ENCODE measurements at regions of chr6 and their contacts with region 1.

Region 1: DNA sequence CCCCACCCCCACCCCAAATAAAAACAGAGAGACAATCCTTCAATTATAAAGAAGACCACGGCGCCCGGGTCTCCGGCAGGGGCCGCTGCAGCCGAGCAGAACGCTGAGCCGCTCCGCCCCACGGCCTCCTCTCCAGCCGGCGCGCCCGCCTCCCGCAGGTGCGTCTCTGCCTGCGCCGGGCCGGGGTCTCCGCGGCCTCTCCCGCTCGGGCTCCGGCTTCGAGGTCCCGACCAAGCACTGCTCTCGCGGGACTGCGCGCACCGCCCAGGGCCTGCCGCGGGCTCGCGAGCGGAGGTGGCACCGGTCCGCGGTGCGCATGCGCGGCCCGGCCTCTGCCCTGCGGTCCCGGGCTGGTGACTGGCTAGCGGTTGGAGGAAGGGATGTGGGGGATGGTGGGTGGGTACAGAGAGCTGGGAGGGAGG is 241 bp upstream of the SIRT5 start:
- DNase-seq: peak; percentile 99
- H3K4me3 ChIP-seq: peak overlapping the region; percentile 75 to 83
- H3K27ac ChIP-seq: peak overlapping the region; percentile 90 to 92
- H3K4me1 ChIP-seq: peaks cover 0 to 7% of the 10 kb centered on the region in 2 experiments; a peak in 2 of 4 replicates
- H3K27me3 ChIP-seq: no peaks in the 10 kb centered on the region
- CTCF ChIP-seq: peak; percentile 49
- EP300 ChIP-seq: no peak
- RAD21 ChIP-seq: peak; percentile 40

Region 2: DNA sequence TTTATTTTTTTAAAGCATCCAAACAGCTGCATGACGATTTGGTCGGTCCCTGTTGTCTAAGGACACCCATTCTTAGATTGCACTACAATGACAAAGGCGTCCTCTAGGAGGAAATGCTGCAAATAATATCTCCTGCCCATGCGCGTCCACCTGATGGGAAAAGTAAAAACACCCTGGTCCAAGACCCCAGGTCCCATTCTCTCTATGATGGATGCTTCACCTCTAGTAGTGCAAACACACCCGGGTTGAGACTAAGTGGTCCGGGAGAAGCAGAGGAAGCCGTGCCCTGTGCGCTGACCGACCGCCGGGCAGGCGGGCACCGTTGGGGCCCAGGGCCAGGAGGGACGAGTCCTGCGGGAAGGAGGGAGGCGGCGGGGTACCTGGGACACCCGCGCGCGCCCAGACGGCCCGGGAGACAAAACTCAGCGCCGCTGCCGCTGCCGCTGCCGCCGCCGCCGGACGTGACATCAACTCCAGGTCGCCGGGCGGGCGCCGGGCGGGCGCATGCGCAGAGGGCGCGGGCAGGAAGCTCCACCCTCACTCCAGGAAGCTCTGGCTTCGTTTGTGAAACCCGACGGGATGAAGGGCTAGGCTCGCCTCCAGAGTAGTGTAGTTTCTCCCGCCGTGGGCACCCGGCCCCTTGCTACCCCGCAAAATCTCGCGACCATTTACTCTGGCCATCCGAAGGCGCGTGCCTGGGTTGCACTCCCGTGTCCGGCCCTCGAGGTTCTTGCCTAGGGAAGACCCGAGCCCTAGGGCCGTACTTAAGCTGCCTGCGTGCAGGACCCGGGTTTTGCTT is 245.9 kb before region 1 on chr6 and contains the start of gene TBC1D7:
- CTCF ChIA-PET with region 1: interaction called, 30 read pairs
- POLR2A ChIA-PET with region 1: interaction called, 3 read pairs
- DNase-seq: peak; percentile 94
- H3K4me3 ChIP-seq: peak within 1 kb of the TSS; percentile 88 to 96
- H3K27ac ChIP-seq: peak within 1 kb of the TSS; percentile 86 to 97
- H3K4me1 ChIP-seq: peaks cover 4 to 12% of the 10 kb centered on the region in 2 experiments; a peak in 3 of 4 replicates
- H3K27me3 ChIP-seq: no peaks in the 10 kb centered on the region
- CTCF ChIP-seq: peak; percentile 24; the same call in 1 of the 2 replicates
- EP300 ChIP-seq: no peak
- RAD21 ChIP-seq: 0 out of 2 replicates have a peak, but pooled peaks have one; percentile 10
- polyA plus RNA-seq, gene TBC1D7: 25.2 and 27.5 TPM in 2 replicates

Region 3: DNA sequence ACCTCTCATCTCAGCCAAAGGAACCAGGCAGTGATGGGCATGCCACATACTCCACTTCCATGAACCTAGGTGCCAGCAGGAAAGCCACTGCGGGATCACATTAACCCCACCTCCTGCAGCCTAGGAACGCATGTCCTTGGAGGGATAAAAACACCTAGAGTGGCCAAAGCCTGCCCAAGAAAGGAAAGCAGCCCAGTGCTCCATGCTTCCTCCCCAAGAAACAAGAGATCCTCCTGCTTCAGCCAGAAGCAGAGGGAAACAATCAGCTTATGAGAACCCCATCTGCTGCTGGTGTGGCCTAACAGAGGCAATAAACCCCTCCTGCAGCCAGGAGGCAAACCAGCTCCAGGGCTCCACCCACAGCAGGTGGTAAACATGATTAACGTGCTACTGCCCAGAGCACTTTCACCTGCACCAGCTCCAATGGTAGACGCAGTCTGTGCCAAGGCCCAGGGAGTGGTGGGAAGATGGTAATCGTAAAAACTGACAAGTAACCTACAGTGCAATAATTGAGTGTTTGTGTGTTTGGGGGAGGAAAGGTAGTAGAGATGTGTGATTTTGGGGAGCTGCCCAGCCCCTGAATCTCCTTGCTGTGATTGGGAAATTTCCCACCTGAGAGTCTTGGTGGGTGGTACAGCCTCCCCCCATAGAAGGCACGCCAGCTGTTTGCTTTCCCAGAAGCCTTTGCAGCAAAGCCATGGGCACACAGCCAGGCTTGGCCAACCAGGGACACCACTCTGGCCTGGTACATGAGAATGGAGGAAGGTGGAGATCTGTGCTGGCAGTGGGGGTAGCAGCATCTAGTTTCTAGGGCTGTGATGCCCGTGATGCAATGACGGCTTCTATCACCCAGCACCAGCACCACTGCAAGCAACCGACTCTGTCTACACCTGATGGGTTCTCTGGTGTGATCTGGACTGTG is 195.2 kb before region 1 on chr6:
- CTCF ChIA-PET with region 1: interaction called, 10 read pairs
- POLR2A ChIA-PET with region 1: no interaction called
- DNase-seq: no peak
- H3K4me3 ChIP-seq: no peak overlapping the region
- H3K27ac ChIP-seq: no peak overlapping the region
- H3K4me1 ChIP-seq: peaks cover 0 to 11% of the 10 kb centered on the region in 2 experiments; a peak in 1 of 4 replicates
- H3K27me3 ChIP-seq: no peaks in the 10 kb centered on the region
- CTCF ChIP-seq: no peak
- EP300 ChIP-seq: no peak
- RAD21 ChIP-seq: no peak

Region 4: GRCh38 chr6:13561624-13562267 is 12.4 kb before region 1 on chr6:
- CTCF ChIA-PET with region 1: interaction called, 48 read pairs
- POLR2A ChIA-PET with region 1: interaction called, 3 read pairs
- DNase-seq: no peak
- H3K4me3 ChIP-seq: no peak overlapping the region
- H3K27ac ChIP-seq: no peak overlapping the region
- H3K4me1 ChIP-seq: peaks cover 0 to 16% of the 10 kb centered on the region in 2 experiments; a peak in 2 of 4 replicates
- H3K27me3 ChIP-seq: peaks cover 4% of the 10 kb centered on the region; the same call in 1 of the 2 replicates
- CTCF ChIP-seq: no peak
- EP300 ChIP-seq: no peak
- RAD21 ChIP-seq: no peak

Region 5: DNA sequence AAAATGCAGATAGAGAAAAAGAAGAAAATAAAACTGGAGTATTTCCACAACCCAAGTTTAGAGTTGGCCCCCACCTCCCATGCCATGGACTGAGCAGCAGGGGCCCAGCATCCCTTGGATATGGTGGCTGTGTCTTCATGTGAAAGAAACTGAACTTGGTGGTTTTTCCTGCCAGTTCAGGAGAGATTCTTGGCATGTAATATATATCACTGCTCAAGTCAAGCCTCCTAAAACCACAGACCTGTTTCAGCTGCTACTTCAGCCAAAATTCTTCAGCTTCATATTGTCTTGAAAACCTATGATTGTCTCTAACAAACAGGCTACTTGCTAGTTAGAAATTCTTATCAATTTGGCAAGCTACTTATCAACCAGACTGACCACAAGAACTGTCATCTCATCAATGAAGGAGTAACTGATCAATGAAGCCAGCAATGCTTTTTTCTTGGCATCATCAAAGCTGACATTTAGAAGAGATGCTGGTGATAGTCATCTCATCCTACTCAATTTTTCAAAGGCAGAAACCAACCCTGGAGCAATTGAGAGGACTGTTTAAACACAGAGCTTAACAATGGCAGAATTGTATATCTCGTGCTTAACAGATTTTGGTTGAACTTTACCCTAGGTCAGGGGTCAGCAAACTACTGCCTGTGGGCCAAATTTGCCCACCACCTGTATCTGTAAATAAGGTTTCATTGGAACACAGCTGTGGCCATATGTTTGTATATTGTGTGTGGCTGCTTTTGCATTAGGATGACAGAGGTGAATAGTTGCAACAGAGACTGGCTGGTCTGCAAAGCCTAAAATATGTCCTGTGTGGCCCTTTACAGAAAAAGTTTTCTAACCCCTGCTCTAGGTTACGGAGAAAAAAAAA is 30.6 kb after region 1 on chr6:
- CTCF ChIA-PET with region 1: interaction called, 16 read pairs
- POLR2A ChIA-PET with region 1: no interaction called
- DNase-seq: no peak
- H3K4me3 ChIP-seq: no peak overlapping the region
- H3K27ac ChIP-seq: 0 out of 4 replicates have a peak overlapping the region, but pooled peaks of 1 of the 2 experiments have one; percentile 14
- H3K4me1 ChIP-seq: peaks cover 0 to 3% of the 10 kb centered on the region in 2 experiments; a peak in 1 of 4 replicates
- H3K27me3 ChIP-seq: no peaks in the 10 kb centered on the region
- CTCF ChIP-seq: no peak
- EP300 ChIP-seq: no peak
- RAD21 ChIP-seq: no peak

Region 6: GRCh38 chr6:13702809-13703302 is 128.7 kb after region 1 on chr6:
- CTCF ChIA-PET with region 1: no interaction called
- POLR2A ChIA-PET with region 1: no interaction called
- DNase-seq: no peak
- H3K4me3 ChIP-seq: no peak overlapping the region
- H3K27ac ChIP-seq: no peak overlapping the region
- H3K4me1 ChIP-seq: peaks cover 0 to 16% of the 10 kb centered on the region in 2 experiments; a peak in 2 of 4 replicates
- H3K27me3 ChIP-seq: no peaks in the 10 kb centered on the region
- CTCF ChIP-seq: no peak
- EP300 ChIP-seq: no peak
- RAD21 ChIP-seq: no peak

Region 7: DNA sequence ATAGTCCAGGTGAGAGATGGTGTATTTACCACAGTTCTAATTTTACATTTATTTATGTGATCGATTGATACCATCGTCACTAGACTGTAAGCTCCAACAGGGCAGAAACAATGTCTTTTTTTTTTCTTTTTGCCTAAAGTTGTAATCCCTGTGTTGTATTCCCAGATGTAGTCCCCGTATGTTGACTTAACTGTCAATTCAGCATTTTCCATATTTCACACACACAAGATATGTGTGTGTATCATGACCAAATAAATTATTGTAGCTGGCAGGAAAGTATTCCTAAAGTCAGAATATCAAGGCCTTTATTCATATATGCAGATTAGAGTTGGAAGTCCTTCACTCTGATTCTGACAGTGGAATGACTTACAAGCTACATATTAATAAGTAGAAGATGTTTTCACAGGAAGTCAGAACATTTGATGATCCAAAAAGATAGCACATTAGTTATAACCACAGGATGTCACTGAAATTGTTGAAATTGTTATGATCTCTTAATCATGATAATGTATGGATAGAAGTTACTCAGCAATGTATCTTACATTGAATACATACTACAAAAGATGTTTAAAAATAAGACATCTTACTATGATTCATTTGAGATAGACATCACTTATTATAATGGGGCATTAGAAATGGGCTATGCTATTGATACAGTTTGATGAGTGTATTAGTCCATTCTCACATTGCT is 361.2 kb after region 1 on chr6:
- CTCF ChIA-PET with region 1: no interaction called
- POLR2A ChIA-PET with region 1: no interaction called
- DNase-seq: no peak
- H3K4me3 ChIP-seq: no peak overlapping the region
- H3K27ac ChIP-seq: peak overlapping the region in 1 of 2 experiments; percentile 13; a peak in 1 of 4 replicates
- H3K4me1 ChIP-seq: peaks cover 0 to 7% of the 10 kb centered on the region in 2 experiments; a peak in 1 of 4 replicates
- H3K27me3 ChIP-seq: no peaks in the 10 kb centered on the region
- CTCF ChIP-seq: no peak
- EP300 ChIP-seq: no peak
- RAD21 ChIP-seq: no peak